IMR-90 (cell line): ENCODE measurements at regions of chr9 and their contacts with region 1.

Region 1: GRCh38 chr9:127970401-127971313 is 10.1 kb downstream of the EEIG1 start:
- DNase-seq: no peak
- ATAC-seq: no peak
- H3K4me3 ChIP-seq: no peak overlapping the region
- H3K27ac ChIP-seq: no peak overlapping the region
- H3K4me1 ChIP-seq: peaks cover 60% of the 10 kb centered on the region
- H3K27me3 ChIP-seq: no peaks in the 10 kb centered on the region
- CTCF ChIP-seq: no peak
- POLR2A ChIP-seq: no peak
- RAD21 ChIP-seq: no peak

Region 2: GRCh38 chr9:128001779-128002298 is 31.2 kb after region 1 on chr9:
- CTCF ChIA-PET with region 1: no interaction called
- POLR2A ChIA-PET with region 1: interaction called, 11 read pairs
- dilution Hi-C with region 1: no loop called
- in situ Hi-C with region 1: no loop called
- intact Hi-C with region 1: no loop called
- DNase-seq: peak; percentile 89
- ATAC-seq: peak; percentile 98
- H3K4me3 ChIP-seq: no peak overlapping the region
- H3K27ac ChIP-seq: peak overlapping the region; percentile 71
- H3K4me1 ChIP-seq: peaks cover 9% of the 10 kb centered on the region
- H3K27me3 ChIP-seq: no peaks in the 10 kb centered on the region
- CTCF ChIP-seq: no peak
- POLR2A ChIP-seq: 0 out of 2 replicates have a peak, but pooled peaks have one; percentile 32
- RAD21 ChIP-seq: peak; percentile 18; the same call in 1 of the 2 replicates

Region 3: GRCh38 chr9:128081056-128081455 is 110.4 kb after region 1 on chr9:
- CTCF ChIA-PET with region 1: no interaction called
- POLR2A ChIA-PET with region 1: interaction called, 3 read pairs
- dilution Hi-C with region 1: no loop called
- in situ Hi-C with region 1: no loop called
- intact Hi-C with region 1: loop called (anchors 5 kb)
- DNase-seq: peak; percentile 98
- ATAC-seq: peak; percentile 96
- H3K4me3 ChIP-seq: no peak overlapping the region
- H3K27ac ChIP-seq: peak overlapping the region; percentile 92; the same call in 1 of the 2 replicates
- H3K4me1 ChIP-seq: peaks cover 32% of the 10 kb centered on the region
- H3K27me3 ChIP-seq: no peaks in the 10 kb centered on the region
- CTCF ChIP-seq: no peak
- POLR2A ChIP-seq: no peak
- RAD21 ChIP-seq: no peak

Region 4: GRCh38 chr9:128098297-128099230 is 127.9 kb after region 1 on chr9:
- CTCF ChIA-PET with region 1: no interaction called
- POLR2A ChIA-PET with region 1: no interaction called
- dilution Hi-C with region 1: no loop called
- in situ Hi-C with region 1: no loop called
- intact Hi-C with region 1: loop called (anchors 1 kb)
- DNase-seq: peak; percentile 98
- ATAC-seq: peak; percentile 75
- H3K4me3 ChIP-seq: peak overlapping the region; percentile 47
- H3K27ac ChIP-seq: peak overlapping the region; percentile 86
- H3K4me1 ChIP-seq: peaks cover 32% of the 10 kb centered on the region
- H3K27me3 ChIP-seq: no peaks in the 10 kb centered on the region
- CTCF ChIP-seq: no peak
- POLR2A ChIP-seq: peak; percentile 99
- RAD21 ChIP-seq: 0 out of 2 replicates have a peak, but pooled peaks have one; percentile 1